Right lobe of liver (tissue), 6 donors: ENCODE measurements at regions of chr11 and their contacts with region 1.

Region 1: DNA sequence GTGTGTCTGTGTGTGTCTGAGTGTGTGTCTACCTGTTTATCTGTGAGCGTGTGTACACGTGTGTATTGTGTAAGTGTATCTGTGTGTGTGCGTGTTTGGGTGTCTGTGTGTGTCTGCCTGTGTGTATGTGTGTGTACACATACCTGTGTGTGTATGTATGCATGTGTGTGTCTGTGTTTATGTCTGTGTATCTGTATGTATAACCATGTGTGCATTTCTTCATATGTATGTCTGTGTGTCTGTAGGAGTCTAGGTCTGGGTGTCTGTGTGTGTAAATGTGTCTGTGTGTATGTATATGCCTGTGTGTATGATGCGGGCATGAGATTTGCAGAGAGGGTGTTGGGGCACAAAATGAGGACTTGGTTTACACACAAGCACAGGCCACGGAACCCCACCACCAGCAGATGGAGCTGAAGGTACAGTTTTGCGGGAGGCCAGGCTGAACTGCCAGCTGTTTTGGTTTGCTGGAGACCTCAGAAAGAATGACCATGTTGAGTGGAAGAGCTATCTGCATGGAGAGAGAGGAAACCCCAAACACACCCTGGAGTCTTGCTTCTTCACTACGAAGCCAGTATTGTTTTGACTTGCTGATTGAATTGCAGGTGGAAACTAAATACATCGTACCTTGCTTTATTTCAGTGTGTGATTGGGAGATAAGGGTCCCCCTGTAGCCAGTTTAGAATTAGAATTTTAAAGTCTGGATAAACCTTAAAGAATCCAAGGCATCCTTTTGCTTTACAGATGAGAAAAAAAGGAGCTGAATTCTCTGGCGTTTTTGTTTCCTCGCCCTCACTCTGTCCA is 497.2 kb downstream of the NTM start:
- DNase-seq: peak; percentile 54 to 64 (median 55)
- ATAC-seq: peak; percentile 60 to 85 (median 72)
- H3K4me3 ChIP-seq: no peak overlapping the region
- H3K27ac ChIP-seq: no peak overlapping the region
- H3K4me1 ChIP-seq: no peaks in the 10 kb centered on the region
- H3K27me3 ChIP-seq: no peaks in the 10 kb centered on the region
- CTCF ChIP-seq: peak; percentile 50 to 64 (median 58)
- POLR2A ChIP-seq: no peak

Region 2: DNA sequence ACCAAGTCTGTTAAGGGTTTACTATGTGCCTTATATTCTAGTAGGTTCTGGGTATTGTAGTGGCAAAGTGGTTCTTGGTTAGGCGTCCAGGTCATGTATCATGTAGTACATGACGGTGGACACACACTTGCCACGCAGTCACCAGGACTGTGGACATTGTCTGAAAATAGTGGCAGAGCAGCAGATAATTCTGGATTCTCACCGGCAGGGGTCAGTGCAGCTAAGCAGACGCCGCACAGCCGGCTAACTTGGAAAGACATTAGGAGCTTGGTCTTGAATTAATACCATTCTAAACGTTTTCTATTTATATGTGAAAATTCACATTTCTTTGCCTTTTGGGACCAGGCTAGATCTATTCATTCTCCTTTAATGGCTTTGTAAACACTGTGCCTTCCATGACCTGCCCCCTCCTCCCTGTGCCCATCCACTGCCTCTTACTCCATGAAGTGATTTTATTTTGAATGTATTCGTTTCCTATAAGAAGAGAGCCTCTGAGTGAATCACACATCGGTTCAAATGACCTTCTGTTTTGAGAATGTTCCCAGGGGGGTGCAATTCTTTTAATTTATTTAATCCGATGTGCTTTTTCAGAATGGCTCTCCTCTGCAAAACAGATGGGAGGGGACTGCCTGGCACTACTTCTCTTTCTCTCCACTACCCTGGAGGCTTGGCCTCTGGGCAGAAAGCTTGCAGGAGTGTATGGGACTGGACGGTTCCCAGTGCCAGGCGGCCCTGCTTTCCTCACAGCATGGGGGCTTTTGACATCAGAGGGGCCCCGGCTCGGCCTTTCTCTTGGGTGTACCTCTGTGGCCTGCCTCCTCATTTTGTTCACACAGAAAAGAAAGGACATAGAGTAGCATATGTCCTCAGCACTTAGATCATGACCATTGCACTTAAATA is 119.3 kb before region 1 on chr11:
- intact Hi-C with region 1: no loop called
- DNase-seq: peak; percentile 55 to 62 (median 57)
- ATAC-seq: peak; percentile 92 to 94 (median 93)
- H3K4me3 ChIP-seq: no peak overlapping the region
- H3K27ac ChIP-seq: no peak overlapping the region
- H3K4me1 ChIP-seq: no peaks in the 10 kb centered on the region
- H3K27me3 ChIP-seq: no peaks in the 10 kb centered on the region
- CTCF ChIP-seq: peak; percentile 58 to 93 (median 87)
- POLR2A ChIP-seq: no peak

Region 3: DNA sequence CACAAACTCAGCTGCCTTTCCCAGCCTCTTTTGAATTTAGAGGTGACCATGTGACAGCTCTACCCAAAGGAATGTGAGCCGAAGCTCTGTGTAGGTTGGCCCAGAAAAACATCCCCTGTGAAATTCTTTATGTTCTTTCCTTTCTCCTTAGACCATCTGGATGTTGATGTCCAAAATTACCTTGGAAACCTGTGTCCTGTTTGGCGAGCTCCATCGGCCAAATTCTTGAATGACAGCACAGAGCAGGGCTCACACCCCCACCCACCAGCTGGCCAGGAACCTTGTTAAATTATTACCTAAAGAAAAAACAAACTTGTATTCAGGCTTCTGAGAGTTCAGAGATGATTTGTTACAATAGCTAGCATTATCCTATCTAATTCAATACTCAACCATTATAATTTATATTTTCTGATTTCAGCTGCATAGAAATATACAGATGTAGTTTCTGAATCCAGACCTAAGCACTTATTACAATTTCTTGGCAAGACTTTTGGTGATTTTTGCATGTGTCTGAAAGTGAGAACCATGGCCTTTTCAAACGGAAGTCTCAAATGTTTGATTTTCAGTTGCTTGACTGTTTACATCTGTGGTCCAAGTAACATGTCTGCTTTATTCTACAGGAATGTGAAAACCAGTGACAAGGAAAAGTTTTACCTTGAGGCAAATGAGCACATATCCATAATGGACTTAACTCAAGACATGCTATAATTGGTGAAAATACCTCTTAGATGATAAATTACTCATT is 57.0 kb after region 1 on chr11:
- intact Hi-C with region 1: no loop called
- DNase-seq: no peak
- ATAC-seq: peak; percentile 47 to 88 (median 64)
- H3K4me3 ChIP-seq: no peak overlapping the region
- H3K27ac ChIP-seq: no peak overlapping the region
- H3K4me1 ChIP-seq: peaks cover 0 to 13% (median 0%) of the 10 kb centered on the region in 4 donors
- H3K27me3 ChIP-seq: no peaks in the 10 kb centered on the region
- CTCF ChIP-seq: no peak
- POLR2A ChIP-seq: no peak

Region 4: GRCh38 chr11:132126973-132127899 is 259.6 kb after region 1 on chr11:
- intact Hi-C with region 1: loop called in 1 of 2 experiments (anchors 10 kb)
- DNase-seq: peak in 2 of 3 donors; percentile 28 to 63
- ATAC-seq: peak; percentile 68 to 84 (median 76)
- H3K4me3 ChIP-seq: no peak overlapping the region
- H3K27ac ChIP-seq: no peak overlapping the region
- H3K4me1 ChIP-seq: no peaks in the 10 kb centered on the region
- H3K27me3 ChIP-seq: no peaks in the 10 kb centered on the region
- CTCF ChIP-seq: peak; percentile 34 to 52 (median 46)
- POLR2A ChIP-seq: no peak